Heart right ventricle (tissue), 16 donors: ENCODE measurements at regions of chr2 and their contacts with region 1.

Region 1: GRCh38 chr2:177332041-177332991 is 60.3 kb upstream of the AGPS start:
- DNase-seq: peak; percentile 19 to 58
- ATAC-seq: peak; percentile 67 to 89 (median 84)
- H3K4me3 ChIP-seq: peak overlapping the region in 4 of 10 donors; percentile 4 to 21 (median 11)
- H3K27ac ChIP-seq: peak overlapping the region in 5 of 10 donors; percentile 5 to 43 (median 13)
- H3K4me1 ChIP-seq: peaks cover 0 to 20% (median 0%) of the 10 kb centered on the region in 9 donors
- H3K27me3 ChIP-seq: no peaks in the 10 kb centered on the region
- CTCF ChIP-seq: peak in 8 of 9 donors; percentile 60 to 76 (median 70)

Region 2: DNA sequence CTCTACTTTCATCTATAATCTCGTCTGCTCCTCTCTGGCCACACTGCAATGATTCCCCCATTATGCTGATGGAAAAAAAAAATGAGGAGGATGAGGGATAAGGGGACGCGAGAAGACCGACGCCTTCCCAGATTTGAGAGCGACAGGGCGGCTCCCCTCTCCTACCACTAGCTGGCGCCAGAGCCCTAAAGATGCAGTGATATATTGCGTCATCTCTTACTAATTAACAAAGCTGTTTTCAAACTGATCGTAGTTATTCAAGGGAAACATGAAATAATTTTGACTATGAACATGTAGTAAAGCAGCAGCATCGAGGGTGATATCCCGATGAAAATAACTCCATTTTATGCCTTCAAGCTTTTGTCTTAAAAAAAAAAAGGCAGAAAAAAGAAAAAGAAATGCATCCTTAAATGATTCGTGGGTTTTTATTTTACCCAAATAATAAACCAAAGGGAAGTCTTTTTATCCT is 167.7 kb before region 1 on chr2:
- intact Hi-C with region 1: loop called (anchors 1 to 5 kb)
- DNase-seq: peak; percentile 81 to 85
- ATAC-seq: peak; percentile 84 to 93 (median 92)
- H3K4me3 ChIP-seq: peak overlapping the region in 9 of 10 donors; percentile 21 to 64 (median 49)
- H3K27ac ChIP-seq: peak overlapping the region; percentile 74 to 90 (median 88)
- H3K4me1 ChIP-seq: peaks cover 8 to 33% (median 21%) of the 10 kb centered on the region in 9 donors
- H3K27me3 ChIP-seq: no peaks in the 10 kb centered on the region
- CTCF ChIP-seq: peak in 8 of 9 donors; percentile 96 to 100 (median 99)

Region 3: DNA sequence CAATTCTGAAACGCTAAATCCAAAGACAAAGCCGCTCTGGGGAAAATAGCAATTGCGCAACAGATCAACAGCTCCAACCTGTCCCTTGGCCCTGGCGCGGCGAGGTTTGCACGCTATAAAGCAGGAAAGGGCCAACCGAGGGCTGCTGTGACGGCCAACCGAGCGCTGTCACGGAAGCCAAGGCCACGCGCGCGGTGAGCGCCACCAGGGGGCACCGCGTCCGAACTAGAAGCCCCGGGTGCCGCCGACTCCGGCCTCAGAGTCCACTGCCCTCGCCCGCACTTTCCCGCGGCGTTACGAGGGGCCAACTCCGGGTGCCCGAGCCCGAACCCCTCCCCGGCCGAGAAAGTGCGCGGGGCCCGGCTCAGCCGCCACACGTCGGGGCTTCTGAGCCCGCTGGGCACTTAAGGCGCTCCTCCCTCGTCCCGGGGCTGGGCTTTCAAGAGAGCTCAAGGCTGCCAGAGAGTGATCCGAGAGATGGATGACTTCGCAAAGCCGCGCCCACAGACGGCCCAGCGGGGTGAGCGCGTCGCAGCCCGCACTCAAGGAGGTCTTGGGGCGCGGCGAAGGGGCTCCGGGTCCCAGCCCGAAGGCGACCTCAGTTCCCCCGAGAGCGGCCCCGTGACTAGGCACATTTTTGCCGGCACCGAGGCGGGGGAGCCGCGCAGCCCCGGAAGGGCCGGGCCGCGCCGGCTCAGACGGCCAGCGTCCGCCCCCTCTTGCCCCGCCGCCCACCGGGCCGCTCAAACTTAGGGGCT is 68.7 kb before region 1 on chr2:
- intact Hi-C with region 1: loop called in 7 of 10 experiments (anchors 1 to 10 kb)
- DNase-seq: peak; percentile 99
- ATAC-seq: peak; percentile 72 to 86 (median 80)
- H3K4me3 ChIP-seq: peak overlapping the region; percentile 79 to 97 (median 94)
- H3K27ac ChIP-seq: peak overlapping the region; percentile 96 to 100 (median 100)
- H3K4me1 ChIP-seq: peaks cover 3 to 55% (median 50%) of the 10 kb centered on the region in 9 donors
- H3K27me3 ChIP-seq: no peaks in the 10 kb centered on the region
- CTCF ChIP-seq: peak; percentile 76 to 98 (median 92)

Region 4: GRCh38 chr2:177314194-177314593 is 18.1 kb before region 1 on chr2:
- intact Hi-C with region 1: no loop called
- DNase-seq: no peak
- ATAC-seq: peak in 7 of 8 donors; percentile 34 to 86 (median 74)
- H3K4me3 ChIP-seq: no peak overlapping the region
- H3K27ac ChIP-seq: peak overlapping the region in 4 of 10 donors; percentile 15 to 29 (median 19)
- H3K4me1 ChIP-seq: peaks cover 0 to 10% (median 0%) of the 10 kb centered on the region in 9 donors
- H3K27me3 ChIP-seq: no peaks in the 10 kb centered on the region
- CTCF ChIP-seq: no peak

Region 5: DNA sequence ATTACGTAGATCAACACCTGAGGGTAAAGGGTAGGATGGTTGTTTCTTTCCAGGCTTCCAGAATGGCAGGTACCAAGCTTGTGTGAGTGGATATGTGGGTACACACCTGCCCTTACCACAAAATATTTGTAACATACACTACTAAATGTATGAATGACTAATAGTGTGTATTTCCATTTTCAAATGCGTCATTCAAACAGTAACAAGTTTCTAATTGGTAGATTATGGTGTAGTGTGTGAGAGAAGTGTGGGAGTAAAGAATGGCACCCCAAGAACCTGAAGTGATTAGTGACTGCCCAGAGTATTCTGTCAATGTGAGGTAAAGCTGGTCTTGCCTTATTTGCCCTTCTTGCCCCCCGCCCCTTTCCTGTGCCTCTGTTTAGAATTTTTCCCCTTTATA is 81.4 kb after region 1 on chr2:
- intact Hi-C with region 1: loop called (anchors 1 to 5 kb)
- DNase-seq: no peak
- ATAC-seq: no peak
- H3K4me3 ChIP-seq: no peak overlapping the region
- H3K27ac ChIP-seq: no peak overlapping the region
- H3K4me1 ChIP-seq: peaks cover 0 to 30% (median 11%) of the 10 kb centered on the region in 9 donors
- H3K27me3 ChIP-seq: no peaks in the 10 kb centered on the region
- CTCF ChIP-seq: no peak

Region 6: DNA sequence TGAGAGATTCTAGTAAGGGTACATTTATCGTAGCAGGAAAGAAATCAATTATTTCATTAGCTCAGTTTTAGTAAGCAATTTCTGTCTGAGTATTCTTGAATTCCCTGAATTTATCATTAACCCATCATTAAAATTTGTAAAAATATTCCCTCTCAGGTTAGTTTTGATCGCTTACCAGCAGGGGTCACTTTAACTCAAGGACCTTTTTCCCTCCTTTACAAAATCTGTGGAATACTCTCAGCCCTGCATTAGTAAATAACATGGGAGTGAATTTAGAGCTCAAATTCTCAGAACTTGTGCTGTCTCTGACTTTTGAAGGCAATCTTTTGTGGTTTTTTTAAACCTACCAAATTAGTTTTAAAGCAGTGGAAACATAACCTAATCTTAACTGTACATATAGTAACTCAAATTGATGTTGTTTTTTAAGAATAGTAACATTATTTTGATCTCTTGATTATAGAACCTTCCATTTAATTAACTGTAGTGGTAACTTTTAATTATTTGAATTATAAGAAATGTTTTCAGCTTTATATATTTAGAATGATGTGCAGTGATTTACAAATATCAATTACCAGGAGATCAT is 157.5 kb after region 1 on chr2:
- intact Hi-C with region 1: loop called in 2 of 10 experiments (anchors 10 kb)
- DNase-seq: peak in 1 of 2 donors; percentile 13
- ATAC-seq: no peak
- H3K4me3 ChIP-seq: no peak overlapping the region
- H3K27ac ChIP-seq: no peak overlapping the region
- H3K4me1 ChIP-seq: no peaks in the 10 kb centered on the region
- H3K27me3 ChIP-seq: no peaks in the 10 kb centered on the region
- CTCF ChIP-seq: peak; percentile 29 to 78 (median 63)

Region 7: GRCh38 chr2:177585234-177585863 is 253.0 kb after region 1 on chr2:
- intact Hi-C with region 1: no loop called
- DNase-seq: peak in 1 of 2 donors; percentile 30
- ATAC-seq: peak; percentile 61 to 92 (median 86)
- H3K4me3 ChIP-seq: no peak overlapping the region
- H3K27ac ChIP-seq: no peak overlapping the region
- H3K4me1 ChIP-seq: peaks cover 0 to 13% (median 0%) of the 10 kb centered on the region in 9 donors
- H3K27me3 ChIP-seq: no peaks in the 10 kb centered on the region
- CTCF ChIP-seq: no peak

Region 8: DNA sequence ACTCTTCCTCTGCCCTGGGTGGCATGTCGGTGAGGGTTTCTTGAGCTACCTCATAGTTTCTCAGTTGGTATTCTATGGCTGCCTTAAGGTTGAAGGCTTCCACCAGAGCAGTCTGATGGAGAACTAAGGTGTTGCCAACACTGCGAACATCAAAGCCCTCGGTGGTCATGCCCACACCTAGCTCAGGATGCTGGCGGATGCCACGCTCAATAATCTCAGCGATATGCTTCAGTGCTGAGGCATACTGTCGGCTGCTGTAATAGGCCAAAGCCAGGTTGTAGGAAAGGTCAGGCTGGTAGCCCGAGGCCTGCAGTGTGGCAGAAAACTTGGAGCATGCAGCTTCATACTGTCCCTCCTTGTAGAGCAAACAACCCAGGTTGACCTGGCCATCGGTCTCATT is 285.5 kb after region 1 on chr2:
- intact Hi-C with region 1: no loop called
- DNase-seq: no peak
- ATAC-seq: peak in 1 of 8 donors; percentile 2
- H3K4me3 ChIP-seq: peak overlapping the region; percentile 25 to 97 (median 75)
- H3K27ac ChIP-seq: peak overlapping the region in 9 of 10 donors; percentile 91 to 100 (median 95)
- H3K4me1 ChIP-seq: peaks cover 3 to 31% (median 11%) of the 10 kb centered on the region in 9 donors
- H3K27me3 ChIP-seq: no peaks in the 10 kb centered on the region
- CTCF ChIP-seq: no peak

Region 9: DNA sequence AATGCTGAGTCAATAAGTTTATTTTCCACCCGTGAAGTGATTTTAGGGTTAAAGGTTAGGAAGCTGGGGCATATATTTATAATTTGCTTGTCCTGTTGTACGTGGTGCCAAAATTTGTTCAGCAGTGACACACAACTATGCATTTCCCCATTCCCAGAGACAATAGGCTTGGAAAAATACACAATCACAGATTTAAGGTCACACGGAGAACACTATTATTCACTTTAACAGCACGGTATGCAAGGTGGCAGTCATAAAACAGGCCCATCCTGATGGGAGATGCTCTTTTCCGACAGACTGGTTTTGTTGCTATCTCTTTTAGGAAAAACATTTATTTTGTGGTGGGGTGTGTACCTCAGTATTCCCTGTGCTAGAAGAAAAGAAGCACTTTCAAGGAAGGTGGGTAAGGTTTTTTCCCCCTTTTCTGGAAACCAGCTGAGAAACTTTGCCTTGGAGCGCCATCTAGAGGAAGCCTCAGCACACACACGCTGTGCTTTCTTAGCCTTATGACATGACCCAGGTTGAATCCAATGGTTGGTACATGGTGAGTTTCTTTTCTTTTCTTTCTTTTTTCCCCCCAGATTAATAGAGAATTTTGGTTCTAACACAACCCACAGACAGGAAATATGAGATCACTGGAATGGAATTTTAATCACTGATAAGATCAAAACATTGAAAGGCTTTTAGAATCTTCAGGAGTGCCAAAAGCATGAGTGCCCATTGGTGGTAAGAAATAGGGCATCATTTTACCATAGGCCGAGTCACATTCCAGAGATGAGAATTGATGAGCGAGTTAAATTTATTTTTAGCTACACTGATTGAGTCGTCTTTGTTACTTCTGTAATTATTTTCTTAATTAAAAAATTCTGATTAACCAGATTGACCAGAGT is 392.3 kb after region 1 on chr2:
- intact Hi-C with region 1: loop called in 7 of 10 experiments (anchors 1 to 10 kb)
- DNase-seq: peak; percentile 36 to 58
- ATAC-seq: peak; percentile 61 to 92 (median 74)
- H3K4me3 ChIP-seq: no peak overlapping the region
- H3K27ac ChIP-seq: peak overlapping the region in 2 of 10 donors; percentile 12 to 66
- H3K4me1 ChIP-seq: peaks cover 0 to 5% (median 0%) of the 10 kb centered on the region in 9 donors
- H3K27me3 ChIP-seq: no peaks in the 10 kb centered on the region
- CTCF ChIP-seq: peak; percentile 79 to 96 (median 88)